ENCODE measurements at regions of chr1 and their contacts with region 1.

Region 1: DNA sequence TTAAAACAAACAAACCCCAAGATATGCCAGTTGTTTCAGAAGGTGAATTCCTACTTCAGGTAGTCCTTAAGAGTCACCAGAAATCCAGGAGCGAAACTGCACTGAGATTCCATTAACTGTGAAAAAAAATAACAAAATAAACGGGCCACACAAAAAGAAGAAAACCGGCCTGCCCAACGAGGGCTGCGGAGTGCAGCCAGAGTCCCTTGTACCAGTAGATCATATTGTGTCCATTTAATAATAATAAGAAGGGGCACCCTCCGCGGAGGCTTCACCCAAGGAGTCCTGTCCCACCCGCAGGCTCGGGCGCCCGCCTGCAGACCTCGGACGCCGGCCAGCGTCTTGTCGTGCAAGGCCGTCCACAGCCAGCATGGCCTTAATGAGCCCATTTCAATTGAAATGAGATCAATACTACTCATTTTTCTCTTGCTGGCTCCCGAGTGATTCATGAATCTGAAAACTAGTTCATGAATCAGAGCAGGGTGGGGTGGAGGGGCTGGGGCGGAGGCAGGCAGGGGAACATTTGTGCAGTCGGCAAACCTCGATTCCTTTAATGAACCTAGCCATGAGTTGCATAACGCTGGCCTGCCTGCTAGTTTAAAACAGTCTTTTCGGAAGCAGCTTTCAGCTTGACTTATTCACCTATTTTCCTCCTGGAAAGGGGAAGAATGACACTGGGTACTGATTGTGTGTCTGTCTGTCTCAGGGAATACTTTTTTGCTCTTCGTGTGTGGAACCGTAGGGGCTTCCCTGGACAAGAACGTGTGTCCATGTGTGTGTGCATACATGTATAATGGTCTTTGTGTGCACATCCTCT is 113.1 kb upstream of the IRF2BP2 start:
- DNase-seq: no peak
- ATAC-seq: peak; percentile 32

Region 2: GRCh38 chr1:234315091-234315541 is 408.0 kb before region 1 on chr1:
- intact Hi-C with region 1: no loop called
- DNase-seq: no peak
- ATAC-seq: no peak

Region 3: DNA sequence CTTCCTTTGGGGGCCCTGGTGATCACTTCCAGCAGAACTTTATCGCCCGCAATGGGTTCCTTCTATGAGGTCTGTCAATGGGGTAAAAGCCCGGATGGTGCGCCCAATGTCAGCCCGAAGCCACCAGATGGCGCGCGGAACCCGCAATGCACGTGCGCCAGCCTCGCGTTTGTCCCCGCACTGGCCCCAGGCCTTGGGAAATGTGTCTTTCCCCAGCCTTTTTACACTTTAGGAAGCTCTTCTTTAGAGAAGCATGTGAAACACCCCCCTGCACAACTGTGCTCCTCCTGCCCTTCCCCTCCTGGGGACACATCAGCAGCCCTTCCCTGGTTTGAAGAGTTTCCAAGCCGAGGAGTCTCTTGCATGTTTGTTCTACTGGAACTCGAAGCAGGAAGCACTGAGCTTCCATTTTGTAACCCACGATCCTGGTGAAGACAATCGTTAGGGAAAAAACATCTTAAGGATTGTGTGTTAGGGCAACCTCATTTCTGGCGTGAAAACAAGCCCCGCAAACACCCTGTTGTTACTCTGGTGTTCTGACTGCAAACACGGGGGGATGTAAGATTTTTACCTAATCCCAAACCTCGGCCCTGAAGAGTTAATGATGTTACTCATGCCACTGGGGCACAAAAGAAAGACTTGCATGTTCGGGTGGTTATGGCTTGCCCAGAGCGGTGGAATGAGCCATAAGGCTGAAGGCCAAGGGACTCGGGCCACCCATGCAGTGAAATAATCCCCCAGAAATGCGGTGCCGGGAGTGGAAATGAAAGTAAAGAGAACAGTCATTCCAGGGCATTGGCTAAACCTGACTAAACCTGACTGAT is 223.8 kb before region 1 on chr1:
- intact Hi-C with region 1: loop called (anchors 5 kb)
- DNase-seq: peak; percentile 97
- ATAC-seq: peak; percentile 97

Region 4: DNA sequence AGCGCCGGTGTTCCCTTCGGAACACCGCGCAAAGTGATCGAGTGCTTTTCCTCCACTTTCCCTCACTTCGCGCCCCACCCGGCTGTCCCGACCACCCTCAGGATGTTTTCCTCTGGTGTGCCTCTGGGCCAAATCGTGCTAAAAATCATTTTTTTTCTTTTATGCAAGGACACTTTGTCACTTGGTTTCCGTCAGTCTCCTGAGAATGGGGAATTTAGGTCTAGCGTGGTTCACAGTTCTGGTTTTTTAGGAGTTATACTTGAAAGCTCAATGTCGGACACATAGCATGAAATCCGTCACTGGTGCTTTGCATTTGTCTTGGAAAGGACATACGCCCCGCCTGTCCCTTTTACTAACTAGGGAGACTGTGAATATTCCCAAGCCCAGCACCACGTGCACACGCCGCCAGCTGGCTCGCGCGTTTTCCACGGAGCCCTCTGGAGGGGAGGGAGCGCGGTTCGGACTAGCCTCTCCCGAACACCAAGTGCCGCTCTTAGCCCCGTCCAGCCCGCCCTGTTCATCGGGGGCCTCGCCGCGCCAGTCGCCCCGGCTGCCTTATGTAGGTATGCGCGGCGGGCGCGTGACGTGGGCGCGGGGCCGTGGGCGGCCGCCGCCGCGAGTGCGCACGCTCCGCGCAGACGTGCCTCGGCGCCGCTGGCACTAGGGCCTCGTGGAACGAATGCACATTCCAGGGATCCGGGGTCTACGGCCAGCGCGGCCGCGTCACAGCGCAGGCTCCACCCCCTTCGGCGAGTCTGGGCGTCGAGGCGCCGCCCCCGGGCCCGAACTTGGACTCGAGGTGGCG is 112.6 kb before region 1 on chr1:
- intact Hi-C with region 1: loop called (anchors 1 kb)
- DNase-seq: peak; percentile 97
- ATAC-seq: peak; percentile 76

Region 5: DNA sequence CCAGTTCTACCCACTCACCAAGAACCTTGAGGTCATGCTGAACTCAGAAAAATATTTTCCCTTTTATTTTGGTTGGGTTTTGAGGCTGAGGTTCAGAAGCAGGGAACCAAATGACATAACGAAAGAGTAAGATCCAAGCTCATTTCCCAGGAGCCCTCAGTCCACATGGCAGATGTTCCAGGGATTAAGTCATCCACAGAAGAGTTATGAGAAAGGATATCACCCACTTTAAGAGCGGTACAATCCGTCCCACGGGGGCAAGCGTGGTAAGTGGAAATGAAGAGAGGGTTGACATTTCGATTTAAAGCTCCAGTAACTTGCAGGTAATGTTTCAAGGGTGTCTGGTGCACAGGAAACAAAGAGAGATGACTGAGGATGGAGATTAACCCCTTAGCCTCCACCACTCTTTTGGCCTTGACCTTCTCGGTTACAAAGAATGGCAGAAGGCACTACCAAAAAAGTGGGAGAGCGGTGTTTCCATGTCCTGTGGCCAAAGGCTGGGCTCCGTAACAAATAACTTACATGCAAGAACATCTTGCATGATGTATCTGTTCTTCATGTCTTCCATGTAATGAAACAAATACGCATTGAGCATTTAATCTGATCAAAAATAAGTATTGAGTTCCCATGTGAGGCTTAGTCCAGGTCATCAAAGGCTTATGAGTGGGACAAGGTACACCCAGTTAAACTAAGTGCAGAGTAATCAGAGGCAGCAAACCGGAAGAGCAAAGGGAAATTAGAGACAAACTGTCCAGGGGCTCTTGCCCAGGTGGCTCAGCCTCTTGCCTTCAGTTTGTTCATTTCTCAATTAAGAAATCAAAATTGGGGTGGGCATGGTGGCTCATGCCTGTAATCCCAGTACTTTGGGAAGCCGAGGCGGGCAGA is 164.1 kb after region 1 on chr1:
- intact Hi-C with region 1: loop called (anchors 2 kb)
- DNase-seq: peak; percentile 82
- ATAC-seq: peak; percentile 76

Region 6: GRCh38 chr1:234978397-234979295 is 255.5 kb after region 1 on chr1:
- intact Hi-C with region 1: loop called (anchors 5 kb)
- DNase-seq: no peak
- ATAC-seq: peak; percentile 31

Region 7: DNA sequence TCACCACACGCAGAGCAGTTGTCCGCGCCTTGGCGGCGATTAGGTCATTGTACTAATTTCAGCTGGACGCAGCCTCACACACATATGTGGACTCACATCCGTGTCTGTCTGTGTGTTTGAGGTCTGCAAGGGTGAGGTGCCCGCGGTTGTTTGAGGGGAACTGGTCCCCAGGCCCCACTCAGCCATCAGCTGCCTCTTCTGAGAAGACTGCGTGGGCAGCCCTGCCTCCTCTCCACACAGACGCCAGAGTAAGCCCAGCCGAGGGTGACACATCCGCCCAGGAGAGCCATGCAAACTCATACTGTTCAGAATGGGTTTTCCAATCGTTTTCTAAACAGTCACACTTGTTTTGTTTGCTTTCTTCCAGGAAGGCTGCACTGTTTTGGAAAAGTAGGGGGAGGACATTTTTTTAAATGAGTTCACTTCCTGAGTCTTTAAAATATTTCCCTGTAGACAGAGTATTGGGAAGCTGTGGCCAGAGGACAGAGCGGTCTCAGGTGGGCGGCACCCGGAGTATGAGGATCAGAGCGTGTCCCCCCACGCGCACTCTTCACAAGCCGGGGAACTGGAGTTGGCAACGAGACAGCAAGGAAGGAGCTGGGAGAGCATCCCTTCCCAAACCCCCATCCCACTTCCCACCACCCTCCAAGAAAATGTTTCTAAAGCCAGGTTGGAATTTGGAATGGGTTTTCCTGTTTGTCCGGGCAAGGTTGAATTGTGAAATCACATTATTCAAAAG is 352.2 kb after region 1 on chr1:
- intact Hi-C with region 1: loop called (anchors 2 kb)
- DNase-seq: peak; percentile 82
- ATAC-seq: peak; percentile 70